Panc1 (cell line): ENCODE measurements at regions of chr2 and their contacts with region 1.

Region 1: GRCh38 chr2:179383975-179384374 is 119.3 kb upstream of the SESTD1 start:
- DNase-seq: no peak
- ATAC-seq: no peak
- H3K4me3 ChIP-seq: no peak overlapping the region
- H3K27ac ChIP-seq: no peak overlapping the region
- H3K4me1 ChIP-seq: no peaks in the 10 kb centered on the region
- H3K27me3 ChIP-seq: no peaks in the 10 kb centered on the region
- CTCF ChIP-seq: no peak

Region 2: DNA sequence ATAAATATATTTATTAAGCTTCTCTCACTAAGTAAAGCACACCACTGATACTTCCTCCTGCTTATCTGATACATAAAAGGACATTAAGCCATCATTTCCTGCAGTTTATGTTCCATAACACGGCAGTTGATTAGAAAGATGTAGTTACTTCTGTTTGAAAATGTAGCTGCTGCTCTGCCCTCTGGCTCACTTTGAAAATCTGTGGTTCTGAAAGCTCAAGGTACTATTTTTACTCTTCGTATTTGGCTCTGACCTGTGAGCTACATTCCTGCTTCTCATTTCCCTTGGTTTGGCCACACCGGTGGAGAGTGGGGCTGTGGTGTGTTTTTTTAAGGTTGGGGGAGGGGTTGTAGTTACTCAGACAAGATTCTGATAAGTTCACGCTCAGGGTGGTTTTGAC is 564.0 kb before region 1 on chr2:
- CTCF ChIA-PET with region 1: interaction called, 11 read pairs
- POLR2A ChIA-PET with region 1: no interaction called
- in situ Hi-C with region 1: no loop called
- intact Hi-C with region 1: no loop called
- DNase-seq: no peak
- ATAC-seq: no peak
- H3K4me3 ChIP-seq: no peak overlapping the region
- H3K27ac ChIP-seq: no peak overlapping the region
- H3K4me1 ChIP-seq: no peaks in the 10 kb centered on the region
- H3K27me3 ChIP-seq: no peaks in the 10 kb centered on the region
- CTCF ChIP-seq: no peak

Region 3: GRCh38 chr2:179264368-179265081 is 119.5 kb before region 1 on chr2 and contains the start of gene SESTD1:
- CTCF ChIA-PET with region 1: no interaction called
- POLR2A ChIA-PET with region 1: no interaction called
- in situ Hi-C with region 1: no loop called
- intact Hi-C with region 1: no loop called
- DNase-seq: no peak
- ATAC-seq: peak; percentile 92
- H3K4me3 ChIP-seq: peak within 1 kb of the TSS; percentile 78 to 85
- H3K27ac ChIP-seq: peak within 1 kb of the TSS; percentile 75
- H3K4me1 ChIP-seq: peaks cover 6% of the 10 kb centered on the region; the same call in 1 of the 2 replicates
- H3K27me3 ChIP-seq: no peaks in the 10 kb centered on the region
- CTCF ChIP-seq: no peak
- total RNA-seq, gene SESTD1: 31.3 TPM

Region 4: DNA sequence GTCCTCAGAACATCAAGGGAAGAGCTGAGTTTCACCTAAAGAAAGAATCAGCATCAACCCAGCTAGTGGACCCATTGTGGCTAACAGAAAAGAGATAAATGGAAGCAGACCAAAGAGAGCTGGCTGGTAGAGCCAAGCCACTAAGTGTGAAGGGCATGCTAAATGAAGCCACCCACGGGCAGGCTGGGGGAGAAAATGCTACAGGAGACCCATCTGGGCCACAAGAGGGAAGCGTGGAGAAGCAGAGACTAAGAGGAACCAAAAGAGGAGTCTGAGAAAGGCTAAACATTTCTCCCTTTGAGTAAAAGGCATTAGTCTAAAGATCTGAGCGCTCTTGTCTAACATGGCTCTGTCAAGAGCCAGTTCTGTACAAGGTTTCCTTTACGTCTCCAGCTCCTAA is 607.4 kb after region 1 on chr2:
- CTCF ChIA-PET with region 1: no interaction called
- POLR2A ChIA-PET with region 1: no interaction called
- in situ Hi-C with region 1: no loop called
- intact Hi-C with region 1: no loop called
- DNase-seq: no peak
- ATAC-seq: peak; percentile 56; the same call in 1 of the 2 replicates
- H3K4me3 ChIP-seq: no peak overlapping the region
- H3K27ac ChIP-seq: no peak overlapping the region
- H3K4me1 ChIP-seq: no peaks in the 10 kb centered on the region
- H3K27me3 ChIP-seq: no peaks in the 10 kb centered on the region
- CTCF ChIP-seq: peak; percentile 35